ENCODE measurements at regions of chr18 and their contacts with region 1.

Region 1: DNA sequence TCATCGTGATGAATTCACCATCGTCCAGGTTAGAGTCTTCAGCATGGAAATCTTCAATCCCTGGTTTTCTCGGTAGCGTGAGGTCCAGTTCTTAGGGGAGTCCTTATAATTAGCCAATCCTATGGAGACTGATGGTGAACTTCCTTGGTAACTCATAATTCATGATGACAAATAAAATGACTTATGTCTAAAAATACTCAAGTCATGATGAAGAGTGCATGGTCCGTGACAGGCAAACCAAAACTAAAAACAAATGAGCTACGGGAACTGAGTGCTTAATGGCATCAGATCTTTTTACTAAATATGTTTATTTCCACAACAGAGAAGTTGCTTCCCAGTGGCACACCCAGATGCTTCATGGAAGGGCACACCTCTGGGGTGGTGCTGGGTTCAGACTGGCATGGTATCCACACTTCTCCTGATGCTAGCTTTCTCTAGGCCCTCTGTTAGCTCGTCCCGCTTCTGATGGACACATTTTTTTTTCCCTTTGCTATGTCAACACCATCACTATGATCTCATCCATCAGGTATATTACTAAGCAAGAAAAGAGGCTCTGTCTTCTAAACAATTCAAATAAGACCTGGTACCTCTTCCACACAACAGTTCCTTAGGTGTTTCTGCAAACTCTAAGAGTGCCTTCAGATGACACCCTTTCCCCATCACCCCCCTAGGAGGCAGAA is 92.8 kb upstream of the NEDD4L start:
- DNase-seq: peak; percentile 52
- H3K4me3 ChIP-seq: no peak overlapping the region
- H3K27ac ChIP-seq: peak overlapping the region; percentile 75
- H3K4me1 ChIP-seq: peaks cover 45% of the 10 kb centered on the region
- H3K27me3 ChIP-seq: no peaks in the 10 kb centered on the region
- CTCF ChIP-seq: no peak

Region 2: GRCh38 chr18:57906852-57907251 is 44.4 kb before region 1 on chr18:
- CTCF ChIA-PET with region 1: no interaction called
- dilution Hi-C with region 1: no loop called
- in situ Hi-C with region 1: no loop called
- intact Hi-C with region 1: loop called (anchors 5 kb)
- DNase-seq: peak; percentile 27
- H3K4me3 ChIP-seq: no peak overlapping the region
- H3K27ac ChIP-seq: no peak overlapping the region
- H3K4me1 ChIP-seq: peaks cover 14% of the 10 kb centered on the region
- H3K27me3 ChIP-seq: no peaks in the 10 kb centered on the region
- CTCF ChIP-seq: peak; percentile 5 to 46